PC-3 (cell line): ENCODE measurements at regions of chr5 and their contacts with region 1.

Region 1: GRCh38 chr5:134370871-134371833 is at the start of gene UBE2B:
- DNase-seq: peak; percentile 94
- ATAC-seq: peak; percentile 64
- H3K4me3 ChIP-seq: peak within 1 kb of the TSS; percentile 99
- H3K27ac ChIP-seq: peak within 1 kb of the TSS; percentile 89
- H3K4me1 ChIP-seq: peaks cover 17% of the 10 kb centered on the region
- H3K27me3 ChIP-seq: no peaks in the 10 kb centered on the region
- CTCF ChIP-seq: no peak
- total RNA-seq, gene UBE2B: 9.5 and 10.0 TPM in 2 replicates

Region 2: GRCh38 chr5:134304311-134304710 is 66.8 kb before region 1 on chr5:
- CTCF ChIA-PET with region 1: interaction called, 3 read pairs
- POLR2A ChIA-PET with region 1: no interaction called
- intact Hi-C with region 1: loop called (anchors 2 kb)
- DNase-seq: no peak
- ATAC-seq: no peak
- H3K4me3 ChIP-seq: no peak overlapping the region
- H3K27ac ChIP-seq: no peak overlapping the region
- H3K4me1 ChIP-seq: no peaks in the 10 kb centered on the region
- H3K27me3 ChIP-seq: no peaks in the 10 kb centered on the region
- CTCF ChIP-seq: no peak